T-cell (primary cell): ENCODE measurements at regions of chr4 and their contacts with region 1.

Region 1: GRCh38 chr4:172938072-172938829 is 230.4 kb upstream of the GALNT7 start:
- DNase-seq: no peak
- ATAC-seq: no peak
- H3K4me3 ChIP-seq: no peak overlapping the region
- H3K4me3 Mint-ChIP-seq: no peak overlapping the region
- H3K27ac ChIP-seq: no peak overlapping the region
- H3K27ac Mint-ChIP-seq: no peak overlapping the region
- H3K4me1 ChIP-seq: no peaks in the 10 kb centered on the region
- H3K4me1 Mint-ChIP-seq: no peaks in the 10 kb centered on the region
- H3K27me3 ChIP-seq: no peaks in the 10 kb centered on the region
- H3K27me3 Mint-ChIP-seq: peaks cover 0 to 3% of the 10 kb centered on the region in 2 donors

Region 2: GRCh38 chr4:173138624-173139023 is 200.4 kb after region 1 on chr4:
- CTCF ChIA-PET with region 1: interaction called in 1 of 2 experiments, 10 read pairs
- POLR2A ChIA-PET with region 1: no interaction called
- DNase-seq: no peak
- ATAC-seq: no peak
- H3K4me3 ChIP-seq: no peak overlapping the region
- H3K4me3 Mint-ChIP-seq: no peak overlapping the region
- H3K27ac ChIP-seq: no peak overlapping the region
- H3K27ac Mint-ChIP-seq: no peak overlapping the region
- H3K4me1 ChIP-seq: no peaks in the 10 kb centered on the region
- H3K4me1 Mint-ChIP-seq: no peaks in the 10 kb centered on the region
- H3K27me3 ChIP-seq: peaks cover 0 to 4% of the 10 kb centered on the region in 2 experiments
- H3K27me3 Mint-ChIP-seq: no peaks in the 10 kb centered on the region